Heart left ventricle (tissue), 16 donors: ENCODE measurements at regions of chr19 and their contacts with region 1.

Region 1: DNA sequence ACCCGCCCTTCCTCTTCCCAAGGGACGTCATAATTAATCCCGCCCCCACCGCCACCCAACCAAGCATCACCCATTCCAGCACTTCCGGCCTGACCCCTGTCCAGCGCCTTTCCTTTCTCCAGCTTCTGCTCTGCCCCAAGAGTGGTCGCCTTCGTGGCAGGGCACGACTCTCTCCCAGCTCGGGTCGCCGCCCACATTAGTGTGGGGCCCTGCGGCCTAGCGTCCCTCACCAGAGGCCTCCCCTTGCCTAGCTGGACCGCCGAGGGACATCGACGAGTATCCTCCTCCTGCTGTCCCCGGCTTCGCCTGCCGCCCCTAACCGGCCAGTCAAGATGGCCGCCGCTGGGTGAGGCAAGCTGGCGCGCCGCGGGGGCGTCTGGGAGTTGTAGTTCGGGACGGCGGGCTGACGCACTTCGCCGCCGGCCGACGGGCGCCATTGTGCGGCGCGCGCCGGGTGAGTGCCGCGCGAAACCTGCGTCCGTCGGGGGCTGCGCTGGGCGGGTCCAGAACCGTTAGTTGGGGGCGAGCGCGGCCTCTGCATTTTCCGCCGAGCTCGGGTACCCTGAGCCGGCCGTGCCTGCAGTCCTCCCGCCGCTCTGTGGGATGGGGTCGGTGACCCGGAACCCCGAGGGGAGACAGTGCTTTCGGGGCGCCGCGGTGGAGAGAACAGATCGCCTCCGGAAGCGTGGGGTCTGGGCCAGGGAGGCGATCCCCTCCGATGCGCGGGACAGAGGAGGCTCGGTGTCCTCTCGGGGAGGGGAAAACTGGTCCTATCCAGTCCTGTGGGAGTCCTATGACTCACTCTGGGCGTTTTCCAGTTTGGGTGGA is at the start of gene ZNF274:
- DNase-seq: peak; percentile 95 to 97 (median 96)
- ATAC-seq: peak; percentile 94 to 96 (median 96)
- H3K4me3 ChIP-seq: peak within 1 kb of the TSS; percentile 73 to 100 (median 94)
- H3K27ac ChIP-seq: peak within 1 kb of the TSS; percentile 90 to 100 (median 99)
- H3K4me1 ChIP-seq: peaks cover 0 to 18% (median 5%) of the 10 kb centered on the region in 12 donors
- H3K27me3 ChIP-seq: no peaks in the 10 kb centered on the region
- CTCF ChIP-seq: no peak
- POLR2A ChIP-seq: peak; percentile 48 to 92
- total RNA-seq, gene ZNF274: 16.2 to 29.0 (median 21.8) TPM

Region 2: DNA sequence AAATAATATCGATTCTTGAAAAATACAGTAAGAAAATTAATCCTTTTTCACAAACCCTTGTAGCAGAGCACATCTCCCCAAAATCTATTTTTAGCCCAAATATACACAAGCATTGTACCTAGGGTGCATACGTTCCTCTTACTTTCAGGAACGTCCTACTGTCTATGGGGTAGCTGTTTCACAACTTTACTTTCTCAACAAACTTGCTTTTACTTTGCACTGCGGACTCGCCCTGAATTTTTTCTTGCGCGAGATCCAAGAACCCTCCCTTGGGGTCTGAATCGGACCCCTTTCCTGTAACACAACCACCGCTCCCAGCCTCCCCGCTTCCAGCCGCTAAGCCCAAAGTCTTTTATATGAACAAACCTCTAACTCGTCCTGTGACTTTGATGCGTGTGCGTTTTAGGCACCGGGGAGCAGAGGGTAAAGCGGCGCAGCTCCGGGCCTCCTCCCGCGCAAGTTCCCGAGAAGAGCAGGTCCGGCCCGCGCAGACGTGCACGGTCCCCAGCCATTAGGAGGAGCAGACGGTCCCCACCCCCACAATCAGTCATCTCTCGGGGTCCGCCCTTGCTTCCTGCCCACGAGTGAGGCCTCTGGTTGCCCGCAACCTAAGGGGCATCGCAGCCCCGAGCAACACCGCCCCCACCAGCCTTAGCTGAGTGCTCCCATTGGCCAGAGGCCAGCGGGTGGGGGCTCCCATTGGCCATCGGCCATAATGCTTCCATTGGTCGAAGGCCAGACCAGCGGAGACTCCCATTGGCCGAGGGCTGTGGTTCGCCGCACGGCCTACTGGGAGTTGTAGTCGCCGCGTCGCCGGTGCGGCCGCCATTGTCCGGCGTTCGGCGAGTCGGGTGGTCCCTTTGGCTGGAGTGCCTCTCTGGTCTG is 95.2 kb after region 1 on chr19 and contains the start of gene ZNF8:
- intact Hi-C with region 1: loop called in 4 of 10 experiments (anchors 1 to 10 kb)
- DNase-seq: peak; percentile 98
- ATAC-seq: peak; percentile 95 to 96 (median 95)
- H3K4me3 ChIP-seq: peak within 1 kb of the TSS; percentile 75 to 97 (median 83)
- H3K27ac ChIP-seq: peak within 1 kb of the TSS; percentile 91 to 98 (median 94)
- H3K4me1 ChIP-seq: peaks cover 0 to 28% (median 16%) of the 10 kb centered on the region in 12 donors
- H3K27me3 ChIP-seq: no peaks in the 10 kb centered on the region
- CTCF ChIP-seq: peak in 5 of 12 donors; percentile 14 to 40 (median 27)
- POLR2A ChIP-seq: peak in 1 of 2 donors; percentile 72
- total RNA-seq, gene ZNF8: 4.0 to 7.8 (median 5.5) TPM

Region 3: DNA sequence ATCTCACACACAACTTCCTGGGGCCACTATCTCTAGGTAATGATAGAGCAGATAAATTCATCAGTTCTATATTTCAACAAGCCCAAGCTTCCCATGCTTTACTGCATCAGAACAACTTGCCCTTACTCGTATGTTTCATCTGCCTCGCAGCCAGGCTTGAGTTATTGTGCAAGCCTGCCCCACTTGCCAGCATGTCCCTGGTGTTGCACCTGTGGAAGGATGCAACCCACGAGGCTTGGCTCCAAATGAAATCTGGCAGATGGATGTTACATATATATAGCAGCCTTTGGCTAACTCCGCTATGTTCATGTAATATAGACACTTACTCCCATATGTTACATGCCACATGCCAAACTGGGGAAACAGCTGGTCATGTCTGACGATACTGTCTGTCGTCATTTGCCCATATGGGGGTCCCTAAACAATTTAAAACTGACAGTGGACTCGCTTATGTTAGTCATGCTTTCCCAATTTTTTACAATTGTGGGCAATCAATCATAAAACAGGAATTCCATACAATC is 128.2 kb after region 1 on chr19:
- intact Hi-C with region 1: loop called in 5 of 10 experiments (anchors 5 kb)
- DNase-seq: no peak
- ATAC-seq: no peak
- H3K4me3 ChIP-seq: no peak overlapping the region
- H3K27ac ChIP-seq: no peak overlapping the region
- H3K4me1 ChIP-seq: peaks cover 0 to 9% (median 5%) of the 10 kb centered on the region in 12 donors
- H3K27me3 ChIP-seq: no peaks in the 10 kb centered on the region
- CTCF ChIP-seq: no peak
- POLR2A ChIP-seq: no peak